Heart right ventricle (tissue), 16 donors: ENCODE measurements at regions of chr7 and their contacts with region 1.

Region 1: DNA sequence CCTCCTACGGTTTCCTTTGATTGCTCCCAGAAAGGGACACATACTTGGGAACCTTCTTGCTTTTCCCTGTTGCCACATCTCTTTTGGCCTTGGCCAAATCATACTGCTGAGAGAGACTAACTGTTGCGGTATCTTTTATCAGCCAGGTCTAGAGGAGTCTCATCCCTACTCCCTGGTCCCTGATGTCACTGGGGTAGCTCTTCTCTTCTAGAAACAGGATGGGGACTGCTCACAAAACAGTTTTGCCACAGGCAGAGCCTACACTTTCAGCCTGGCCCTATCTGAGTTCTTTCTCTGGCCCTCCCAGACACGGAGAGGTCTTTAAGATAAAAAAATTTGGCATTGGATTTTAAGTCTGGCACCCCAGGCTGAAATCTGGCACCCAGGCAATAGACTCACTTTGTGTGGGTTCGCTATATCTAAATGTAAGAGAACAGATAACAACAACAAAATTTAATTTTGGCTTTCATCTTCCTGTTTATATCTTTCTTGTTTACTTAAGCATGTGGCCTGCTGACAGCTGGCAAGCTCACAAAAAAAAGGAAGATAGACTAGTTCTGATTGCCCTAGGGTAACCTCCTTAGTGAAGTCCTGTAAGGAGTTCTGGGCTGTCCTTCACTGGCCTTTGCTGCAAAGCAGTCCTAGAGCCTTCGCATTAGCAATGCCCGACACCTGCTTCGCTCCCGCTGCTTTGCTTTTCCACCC is 228.3 kb upstream of the NPVF start:
- DNase-seq: peak in 1 of 2 donors; percentile 38
- ATAC-seq: peak; percentile 53 to 71 (median 66)
- H3K4me3 ChIP-seq: no peak overlapping the region
- H3K27ac ChIP-seq: peak overlapping the region in 7 of 10 donors; percentile 4 to 64 (median 47)
- H3K4me1 ChIP-seq: peaks cover 0 to 42% (median 26%) of the 10 kb centered on the region in 9 donors
- H3K27me3 ChIP-seq: no peaks in the 10 kb centered on the region
- CTCF ChIP-seq: no peak

Region 2: GRCh38 chr7:25565949-25566348 is 109.3 kb after region 1 on chr7:
- intact Hi-C with region 1: loop called in 2 of 10 experiments (anchors 10 kb)
- DNase-seq: peak; percentile 33 to 36
- ATAC-seq: peak in 2 of 8 donors; percentile 27 to 43
- H3K4me3 ChIP-seq: no peak overlapping the region
- H3K27ac ChIP-seq: peak overlapping the region in 1 of 10 donors; percentile 3
- H3K4me1 ChIP-seq: peaks cover 0 to 9% (median 7%) of the 10 kb centered on the region in 9 donors
- H3K27me3 ChIP-seq: peaks cover 0 to 8% (median 0%) of the 10 kb centered on the region in 7 donors
- CTCF ChIP-seq: peak; percentile 98 to 100 (median 100)